ENCODE measurements at regions of chr1 and their contacts with region 1.

Region 1: GRCh38 chr1:224182866-224183590 is at the start of gene DEGS1:
- DNase-seq: peak; percentile 94
- H3K4me3 Mint-ChIP-seq: peak within 1 kb of the TSS; percentile 85
- H3K27ac Mint-ChIP-seq: peak within 1 kb of the TSS; percentile 91
- H3K4me1 Mint-ChIP-seq: peaks cover 30% of the 10 kb centered on the region
- H3K27me3 Mint-ChIP-seq: no peaks in the 10 kb centered on the region
- CTCF ChIP-seq: no peak
- total RNA-seq, gene DEGS1: 99.1 and 118 TPM in 2 replicates

Region 2: DNA sequence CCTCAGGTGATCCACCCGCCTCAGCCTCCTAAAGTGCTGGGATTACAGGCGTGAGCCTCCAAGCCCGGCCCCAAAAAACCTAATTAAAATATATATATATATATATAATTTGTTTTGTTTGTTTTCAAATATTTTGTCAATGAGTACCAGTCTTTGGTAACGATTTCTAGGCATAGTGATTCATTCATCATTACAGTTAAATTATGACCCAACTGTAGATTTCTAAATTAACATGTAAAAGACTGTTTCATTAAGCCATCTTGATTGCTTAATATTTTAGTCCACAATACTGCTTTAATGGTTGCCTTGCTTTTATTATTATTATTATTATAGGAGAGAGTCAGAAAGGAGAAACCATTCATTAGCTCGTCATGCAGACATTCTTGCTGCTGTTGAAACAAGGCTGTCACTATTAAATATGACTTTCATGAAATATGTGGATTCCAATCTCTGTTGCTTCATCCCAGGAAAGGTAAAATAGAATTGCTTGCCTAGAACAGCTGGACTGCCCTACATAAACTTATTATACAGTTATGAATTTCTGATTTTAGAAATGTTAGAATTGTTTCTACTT is 49.2 kb before region 1 on chr1:
- CTCF ChIA-PET with region 1: interaction called, 3 read pairs
- POLR2A ChIA-PET with region 1: interaction called, 11 read pairs
- intact Hi-C with region 1: no loop called
- DNase-seq: no peak
- H3K4me3 Mint-ChIP-seq: no peak overlapping the region
- H3K27ac Mint-ChIP-seq: peak overlapping the region; percentile 46
- H3K4me1 Mint-ChIP-seq: peaks cover 6% of the 10 kb centered on the region
- H3K27me3 Mint-ChIP-seq: no peaks in the 10 kb centered on the region
- CTCF ChIP-seq: no peak

Region 3: DNA sequence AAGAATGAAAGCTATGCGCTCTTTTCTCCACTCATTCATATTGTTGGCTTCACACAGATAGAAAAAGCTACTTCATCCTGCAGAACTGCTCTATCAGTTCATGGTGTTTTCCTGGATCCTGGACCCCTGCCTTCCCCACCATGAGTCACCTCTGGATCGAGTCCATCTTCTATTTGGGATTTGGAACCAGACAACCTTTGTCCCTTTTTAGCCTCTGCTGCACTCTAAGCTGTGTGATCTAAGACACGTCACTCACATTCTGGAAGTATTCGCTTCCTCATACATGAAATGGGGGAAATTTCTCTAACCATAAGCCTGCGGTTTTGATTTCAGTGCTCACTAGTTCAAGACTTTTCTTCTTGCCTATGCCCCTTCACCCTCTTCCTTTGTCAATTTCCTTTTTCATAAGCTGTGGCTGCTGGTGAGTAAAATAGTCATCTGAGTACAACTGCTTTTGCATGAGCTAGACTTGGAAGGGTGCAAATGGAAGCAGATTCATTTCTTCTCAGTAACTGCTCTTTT is 14.1 kb before region 1 on chr1:
- CTCF ChIA-PET with region 1: interaction called, 11 read pairs
- POLR2A ChIA-PET with region 1: interaction called, 28 read pairs
- intact Hi-C with region 1: no loop called
- DNase-seq: peak; percentile 50
- H3K4me3 Mint-ChIP-seq: no peak overlapping the region
- H3K27ac Mint-ChIP-seq: no peak overlapping the region
- H3K4me1 Mint-ChIP-seq: peaks cover 12% of the 10 kb centered on the region
- H3K27me3 Mint-ChIP-seq: peaks cover 25% of the 10 kb centered on the region
- CTCF ChIP-seq: no peak

Region 4: GRCh38 chr1:224203243-224204016 is 20.4 kb after region 1 on chr1:
- CTCF ChIA-PET with region 1: interaction called, 3 read pairs
- POLR2A ChIA-PET with region 1: interaction called, 61 read pairs
- intact Hi-C with region 1: no loop called
- DNase-seq: peak; percentile 62
- H3K4me3 Mint-ChIP-seq: no peak overlapping the region
- H3K27ac Mint-ChIP-seq: no peak overlapping the region
- H3K4me1 Mint-ChIP-seq: peaks cover 21% of the 10 kb centered on the region
- H3K27me3 Mint-ChIP-seq: no peaks in the 10 kb centered on the region
- CTCF ChIP-seq: no peak

Region 5: GRCh38 chr1:224213438-224214112 is 30.5 kb after region 1 on chr1:
- CTCF ChIA-PET with region 1: interaction called, 4 read pairs
- POLR2A ChIA-PET with region 1: interaction called, 26 read pairs
- intact Hi-C with region 1: no loop called
- DNase-seq: peak; percentile 33
- H3K4me3 Mint-ChIP-seq: no peak overlapping the region
- H3K27ac Mint-ChIP-seq: no peak overlapping the region
- H3K4me1 Mint-ChIP-seq: peaks cover 21% of the 10 kb centered on the region
- H3K27me3 Mint-ChIP-seq: no peaks in the 10 kb centered on the region
- CTCF ChIP-seq: no peak

Region 6: GRCh38 chr1:224223819-224224714 is 41.0 kb after region 1 on chr1:
- CTCF ChIA-PET with region 1: interaction called, 3 read pairs
- POLR2A ChIA-PET with region 1: interaction called, 26 read pairs
- intact Hi-C with region 1: loop called (anchors 5 kb)
- DNase-seq: peak; percentile 91
- H3K4me3 Mint-ChIP-seq: no peak overlapping the region
- H3K27ac Mint-ChIP-seq: peak overlapping the region; percentile 85
- H3K4me1 Mint-ChIP-seq: peaks cover 28% of the 10 kb centered on the region
- H3K27me3 Mint-ChIP-seq: no peaks in the 10 kb centered on the region
- CTCF ChIP-seq: no peak

Region 7: DNA sequence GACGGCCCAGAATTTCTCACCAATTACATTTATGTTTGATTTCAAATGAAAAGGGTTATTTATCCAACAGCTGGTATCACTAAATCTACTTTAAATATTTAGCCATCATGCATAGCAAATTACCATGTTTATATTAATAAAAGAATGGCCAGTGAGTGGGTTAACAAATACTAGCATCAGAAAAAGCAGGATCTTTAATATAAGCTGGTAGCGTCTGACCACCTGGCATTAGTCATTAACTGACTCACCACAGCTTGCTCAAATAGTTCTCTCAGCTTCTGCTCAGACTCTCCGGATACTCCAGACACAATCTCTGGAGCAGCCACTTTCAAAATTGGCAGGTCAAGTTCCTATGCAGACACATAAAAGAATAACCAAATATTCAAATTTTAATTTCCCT is 117.3 kb after region 1 on chr1:
- CTCF ChIA-PET with region 1: no interaction called
- POLR2A ChIA-PET with region 1: interaction called, 7 read pairs
- intact Hi-C with region 1: loop called (anchors 10 kb)
- DNase-seq: peak; percentile 90
- H3K4me3 Mint-ChIP-seq: no peak overlapping the region
- H3K27ac Mint-ChIP-seq: peak overlapping the region; percentile 65
- H3K4me1 Mint-ChIP-seq: peaks cover 6% of the 10 kb centered on the region
- H3K27me3 Mint-ChIP-seq: no peaks in the 10 kb centered on the region
- CTCF ChIP-seq: no peak

Region 8: GRCh38 chr1:224510880-224511644 is 328.0 kb after region 1 on chr1:
- CTCF ChIA-PET with region 1: no interaction called
- POLR2A ChIA-PET with region 1: no interaction called
- intact Hi-C with region 1: no loop called
- DNase-seq: no peak
- H3K4me3 Mint-ChIP-seq: no peak overlapping the region
- H3K27ac Mint-ChIP-seq: no peak overlapping the region
- H3K4me1 Mint-ChIP-seq: peaks cover 21% of the 10 kb centered on the region
- H3K27me3 Mint-ChIP-seq: no peaks in the 10 kb centered on the region
- CTCF ChIP-seq: no peak

Measured in MCF 10A (cell line).